Naive thymus-derived CD4-positive, alpha-beta T cell (primary cell): ENCODE measurements at regions of chr19 and their contacts with region 1.

Region 1: GRCh38 chr19:2610637-2611482 is 91.6 kb downstream of the GNG7 start:
- DNase-seq: peak; percentile 69 to 93 (median 81)
- ATAC-seq: peak; percentile 86
- H3K4me3 ChIP-seq: peak overlapping the region; percentile 61
- H3K4me3 Mint-ChIP-seq: peak overlapping the region; percentile 70 to 91 (median 85)
- H3K27ac ChIP-seq: peak overlapping the region; percentile 55
- H3K27ac Mint-ChIP-seq: peak overlapping the region in 6 of 9 donors; percentile 41 to 86 (median 60)
- H3K4me1 ChIP-seq: peaks cover 17 to 23% of the 10 kb centered on the region in 2 donors
- H3K4me1 Mint-ChIP-seq: peaks cover 16 to 44% (median 34%) of the 10 kb centered on the region in 7 donors
- H3K27me3 ChIP-seq: no peaks in the 10 kb centered on the region
- H3K27me3 Mint-ChIP-seq: peaks cover 0 to 26% (median 0%) of the 10 kb centered on the region in 5 donors

Region 2: DNA sequence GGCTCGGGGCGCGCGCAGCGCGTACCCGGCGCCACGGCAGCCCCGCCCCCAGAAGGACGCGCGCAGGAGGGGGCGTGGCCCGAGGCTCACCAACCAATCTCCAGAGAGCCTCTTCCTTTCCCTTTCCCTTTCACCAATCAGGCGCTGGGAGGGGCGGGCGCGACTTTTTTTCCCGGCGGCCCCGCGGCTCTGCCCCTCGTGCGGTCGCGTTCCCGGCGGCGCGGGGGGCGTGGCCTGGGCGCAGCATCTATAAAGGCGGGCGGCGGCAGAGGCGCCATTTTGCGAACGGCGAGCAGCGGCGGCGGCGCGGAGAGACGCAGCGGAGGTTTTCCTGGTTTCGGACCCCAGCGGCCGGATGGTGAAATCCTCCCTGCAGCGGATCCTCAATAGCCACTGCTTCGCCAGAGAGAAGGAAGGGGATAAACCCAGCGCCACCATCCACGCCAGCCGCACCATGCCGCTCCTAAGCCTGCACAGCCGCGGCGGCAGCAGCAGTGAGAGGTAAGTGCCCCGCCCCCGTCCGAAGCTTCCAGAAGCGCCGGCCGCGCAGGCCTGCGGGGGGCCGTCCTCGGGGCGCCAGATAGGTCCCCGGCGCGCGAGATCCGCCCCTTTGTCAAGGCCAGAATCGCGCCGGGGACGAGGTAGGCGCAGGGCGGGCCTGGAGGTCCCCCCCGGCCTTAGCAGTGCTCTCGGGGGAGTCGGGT is 341.5 kb before region 1 on chr19:
- CTCF ChIA-PET with region 1: no interaction called
- POLR2A ChIA-PET with region 1: interaction called, 4 read pairs
- intact Hi-C with region 1: loop called (anchors 2 to 10 kb)
- DNase-seq: peak; percentile 98 to 100 (median 99)
- ATAC-seq: peak; percentile 90
- H3K4me3 ChIP-seq: peak overlapping the region; percentile 96
- H3K4me3 Mint-ChIP-seq: peak overlapping the region; percentile 86 to 96 (median 90)
- H3K27ac ChIP-seq: peak overlapping the region; percentile 87
- H3K27ac Mint-ChIP-seq: peak overlapping the region; percentile 72 to 94 (median 89)
- H3K4me1 ChIP-seq: peaks cover 32 to 34% of the 10 kb centered on the region in 2 donors
- H3K4me1 Mint-ChIP-seq: peaks cover 28 to 52% (median 35%) of the 10 kb centered on the region in 7 donors
- H3K27me3 ChIP-seq: no peaks in the 10 kb centered on the region
- H3K27me3 Mint-ChIP-seq: no peaks in the 10 kb centered on the region

Region 3: DNA sequence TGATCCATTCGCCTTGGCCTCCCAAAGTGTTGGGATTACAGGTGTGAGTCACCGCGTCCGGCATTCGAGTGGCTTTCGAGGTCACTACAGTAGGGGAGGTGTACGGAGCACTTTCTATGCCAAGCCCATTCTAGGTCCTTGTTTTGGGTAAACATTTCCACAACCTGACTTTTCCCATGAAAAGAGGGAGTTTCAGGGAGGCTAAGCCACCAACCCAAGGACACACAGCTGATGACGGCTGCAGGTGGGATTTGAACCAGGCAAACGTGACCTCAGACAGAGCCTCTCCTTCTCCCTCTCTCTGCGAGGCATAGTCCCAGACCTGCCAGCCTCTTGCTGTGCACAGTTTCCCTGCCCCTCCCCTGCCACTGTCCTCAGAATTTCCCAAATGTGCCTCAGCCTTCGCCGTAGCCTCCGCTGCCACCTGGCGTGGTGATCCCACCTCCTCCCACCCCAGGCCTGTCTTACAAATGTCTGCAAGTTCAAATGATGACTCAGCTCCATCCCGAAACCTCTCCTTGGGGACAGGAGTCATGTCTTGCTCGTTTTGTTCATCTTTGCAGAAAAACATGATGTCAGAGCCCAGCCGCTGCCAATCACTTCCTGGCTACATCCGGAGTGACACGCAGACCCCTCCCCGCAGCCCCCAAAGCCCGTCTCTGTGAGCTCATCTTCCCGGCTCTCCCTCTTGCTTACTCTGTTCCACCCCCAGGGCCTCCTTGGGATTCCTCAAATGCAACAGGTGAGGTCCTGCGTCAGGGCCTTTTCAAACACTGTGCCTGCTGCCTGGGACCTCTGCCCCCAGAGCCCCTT is 141.6 kb before region 1 on chr19:
- CTCF ChIA-PET with region 1: interaction called, 21 read pairs
- POLR2A ChIA-PET with region 1: interaction called, 7 read pairs
- intact Hi-C with region 1: loop called in 1 of 2 experiments (anchors 1 kb)
- DNase-seq: peak in 1 of 9 donors; percentile 42
- ATAC-seq: no peak
- H3K4me3 ChIP-seq: no peak overlapping the region
- H3K4me3 Mint-ChIP-seq: peak overlapping the region in 1 of 10 donors; percentile 2
- H3K27ac ChIP-seq: no peak overlapping the region
- H3K27ac Mint-ChIP-seq: peak overlapping the region in 1 of 9 donors; percentile 36
- H3K4me1 ChIP-seq: no peaks in the 10 kb centered on the region
- H3K4me1 Mint-ChIP-seq: peaks cover 0 to 10% (median 5%) of the 10 kb centered on the region in 7 donors
- H3K27me3 ChIP-seq: no peaks in the 10 kb centered on the region
- H3K27me3 Mint-ChIP-seq: peaks cover 0 to 2% (median 0%) of the 10 kb centered on the region in 5 donors

Region 4: GRCh38 chr19:2578901-2579677 is 31.8 kb before region 1 on chr19:
- CTCF ChIA-PET with region 1: interaction called, 4 read pairs
- POLR2A ChIA-PET with region 1: interaction called, 3 read pairs
- intact Hi-C with region 1: loop called in 1 of 2 experiments (anchors 1 kb)
- DNase-seq: peak; percentile 21 to 67 (median 47)
- ATAC-seq: peak; percentile 65
- H3K4me3 ChIP-seq: peak overlapping the region; percentile 33
- H3K4me3 Mint-ChIP-seq: peak overlapping the region in 6 of 10 donors; percentile 51 to 69 (median 62)
- H3K27ac ChIP-seq: no peak overlapping the region
- H3K27ac Mint-ChIP-seq: no peak overlapping the region
- H3K4me1 ChIP-seq: peaks cover 7 to 10% of the 10 kb centered on the region in 2 donors
- H3K4me1 Mint-ChIP-seq: peaks cover 0 to 11% (median 4%) of the 10 kb centered on the region in 7 donors
- H3K27me3 ChIP-seq: no peaks in the 10 kb centered on the region
- H3K27me3 Mint-ChIP-seq: peaks cover 0 to 24% (median 0%) of the 10 kb centered on the region in 5 donors

Region 5: DNA sequence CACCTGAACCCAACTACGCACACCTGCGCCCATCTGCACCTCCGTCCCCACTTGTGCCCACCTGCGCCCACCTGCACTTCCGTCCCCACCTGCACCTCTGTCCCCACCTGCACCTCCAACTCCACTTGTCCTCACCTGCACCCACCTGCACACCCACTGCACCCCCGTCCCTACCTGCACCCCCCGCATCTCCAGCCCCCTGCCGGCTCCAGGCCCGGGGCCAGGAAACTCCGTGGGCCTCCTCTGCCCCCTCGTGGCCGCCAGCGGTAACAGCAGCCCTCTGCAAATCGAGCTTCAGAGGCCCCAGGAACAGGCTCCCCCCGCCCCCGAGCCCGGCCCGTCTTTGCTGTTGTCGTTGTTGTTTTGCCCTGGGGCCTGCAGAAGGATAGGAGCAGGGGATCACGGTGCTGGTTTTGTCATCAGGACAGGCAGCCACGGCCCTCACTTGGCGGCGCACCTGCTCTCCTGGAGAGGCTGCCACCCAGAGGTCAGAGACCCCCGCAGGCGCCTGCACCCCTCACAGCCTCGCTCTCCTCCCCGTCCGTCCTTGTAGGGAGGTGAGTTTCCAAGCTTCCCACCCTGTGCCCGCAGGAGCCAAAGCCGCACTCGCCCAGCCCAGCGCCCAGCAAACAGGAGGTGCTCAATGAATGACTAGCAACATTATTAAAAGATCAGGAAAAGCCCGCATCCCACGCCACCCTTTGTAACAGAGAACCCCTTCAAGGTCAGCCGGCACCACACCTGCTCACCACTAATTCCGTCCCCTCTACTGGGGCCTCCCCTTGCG is 26.2 kb after region 1 on chr19:
- CTCF ChIA-PET with region 1: interaction called, 29 read pairs
- POLR2A ChIA-PET with region 1: interaction called, 6 read pairs
- intact Hi-C with region 1: loop called in 1 of 2 experiments (anchors 1 kb)
- DNase-seq: peak; percentile 64 to 84 (median 74)
- ATAC-seq: peak; percentile 97
- H3K4me3 ChIP-seq: no peak overlapping the region
- H3K4me3 Mint-ChIP-seq: peak overlapping the region in 5 of 10 donors; percentile 23 to 37 (median 23)
- H3K27ac ChIP-seq: no peak overlapping the region
- H3K27ac Mint-ChIP-seq: peak overlapping the region in 1 of 9 donors; percentile 70
- H3K4me1 ChIP-seq: peaks cover 0 to 10% of the 10 kb centered on the region in 2 donors
- H3K4me1 Mint-ChIP-seq: peaks cover 5 to 18% (median 13%) of the 10 kb centered on the region in 7 donors
- H3K27me3 ChIP-seq: no peaks in the 10 kb centered on the region
- H3K27me3 Mint-ChIP-seq: peaks cover 0 to 11% (median 0%) of the 10 kb centered on the region in 5 donors